ENCODE measurements at regions of chr4 and their contacts with region 1.

Region 1: GRCh38 chr4:123661080-123661737 is 264.6 kb downstream of the SPRY1 start:
- DNase-seq: no peak
- ATAC-seq: no peak
- H3K4me3 ChIP-seq: no peak overlapping the region
- H3K27ac ChIP-seq: no peak overlapping the region
- H3K4me1 ChIP-seq: peaks cover 30% of the 10 kb centered on the region
- H3K27me3 ChIP-seq: no peaks in the 10 kb centered on the region
- CTCF ChIP-seq: peak; percentile 36; the same call in 1 of the 2 replicates
- EP300 ChIP-seq: no peak
- POLR2A ChIP-seq: no peak
- RAD21 ChIP-seq: peak; percentile 47; the same call in 1 of the 2 replicates

Region 2: DNA sequence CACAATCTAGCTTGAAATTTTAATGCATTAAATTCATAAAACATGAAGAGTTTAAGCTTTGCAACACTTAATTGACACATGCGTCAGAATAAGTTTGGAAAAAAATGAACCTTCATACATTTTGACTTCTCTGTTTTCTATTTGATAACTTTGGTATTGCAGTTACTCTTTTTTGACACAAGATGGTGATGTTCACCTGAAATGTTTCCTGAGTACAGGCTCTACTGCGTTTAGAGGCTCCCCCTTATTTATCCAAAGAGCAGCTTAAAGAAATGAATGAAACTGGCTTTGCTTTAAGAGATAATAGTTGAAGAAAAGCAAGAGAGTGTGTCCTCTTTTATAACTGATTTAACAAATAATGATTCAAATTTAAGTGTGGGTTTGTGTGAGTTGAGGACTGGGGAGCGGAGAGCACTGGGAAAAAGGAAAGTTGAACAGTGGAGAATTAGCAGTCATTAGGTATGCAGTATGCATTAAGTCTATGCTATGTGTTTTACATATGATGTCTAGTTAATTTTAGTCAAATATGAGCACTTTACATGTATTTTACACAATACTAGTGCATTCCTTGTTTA is 558.2 kb before region 1 on chr4:
- CTCF ChIA-PET with region 1: interaction called, 17 read pairs
- POLR2A ChIA-PET with region 1: no interaction called
- in situ Hi-C with region 1: no loop called
- intact Hi-C with region 1: loop called (anchors 1 kb)
- DNase-seq: peak; percentile 49
- ATAC-seq: peak; percentile 77
- H3K4me3 ChIP-seq: no peak overlapping the region
- H3K27ac ChIP-seq: no peak overlapping the region
- H3K4me1 ChIP-seq: no peaks in the 10 kb centered on the region
- H3K27me3 ChIP-seq: no peaks in the 10 kb centered on the region
- CTCF ChIP-seq: peak; percentile 69
- EP300 ChIP-seq: no peak
- POLR2A ChIP-seq: no peak
- RAD21 ChIP-seq: peak; percentile 69; the same call in 1 of the 2 replicates

Region 3: GRCh38 chr4:123116412-123116811 is 544.8 kb before region 1 on chr4:
- CTCF ChIA-PET with region 1: no interaction called
- POLR2A ChIA-PET with region 1: no interaction called
- in situ Hi-C with region 1: loop called (anchors 10 kb)
- intact Hi-C with region 1: no loop called
- DNase-seq: peak; percentile 37
- ATAC-seq: no peak
- H3K4me3 ChIP-seq: no peak overlapping the region
- H3K27ac ChIP-seq: no peak overlapping the region
- H3K4me1 ChIP-seq: peaks cover 10% of the 10 kb centered on the region
- H3K27me3 ChIP-seq: no peaks in the 10 kb centered on the region; a peak in 1 of 5 replicates
- CTCF ChIP-seq: no peak
- EP300 ChIP-seq: no peak
- POLR2A ChIP-seq: no peak
- RAD21 ChIP-seq: no peak

Region 4: GRCh38 chr4:123127218-123127617 is 534.0 kb before region 1 on chr4:
- CTCF ChIA-PET with region 1: no interaction called
- POLR2A ChIA-PET with region 1: no interaction called
- in situ Hi-C with region 1: no loop called
- intact Hi-C with region 1: loop called (anchors 1 kb)
- DNase-seq: no peak
- ATAC-seq: no peak
- H3K4me3 ChIP-seq: no peak overlapping the region
- H3K27ac ChIP-seq: no peak overlapping the region
- H3K4me1 ChIP-seq: peaks cover 6% of the 10 kb centered on the region; the same call in 1 of the 2 replicates
- H3K27me3 ChIP-seq: no peaks in the 10 kb centered on the region
- CTCF ChIP-seq: no peak; the same call in 1 of the 2 replicates
- EP300 ChIP-seq: no peak
- POLR2A ChIP-seq: no peak
- RAD21 ChIP-seq: no peak

Region 5: DNA sequence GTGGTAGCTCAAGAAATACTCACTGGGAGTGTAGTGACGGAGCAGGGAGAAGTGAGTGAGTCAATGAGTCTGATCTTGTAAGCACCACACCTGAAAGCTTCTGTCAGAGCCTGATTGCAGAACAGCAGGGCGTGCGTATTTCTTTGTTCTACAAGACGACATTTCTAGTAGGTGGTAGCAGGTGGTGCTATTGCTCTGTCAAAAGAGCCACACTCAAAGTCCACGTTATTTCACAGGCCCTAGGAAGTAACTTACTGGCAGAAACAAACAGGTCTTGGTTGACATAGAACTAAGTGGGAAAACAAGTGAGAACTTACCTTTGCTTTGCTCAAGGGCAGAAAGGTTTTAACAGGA is 311.0 kb before region 1 on chr4:
- CTCF ChIA-PET with region 1: interaction called, 3 read pairs
- POLR2A ChIA-PET with region 1: no interaction called
- in situ Hi-C with region 1: no loop called
- intact Hi-C with region 1: loop called (anchors 1 kb)
- DNase-seq: peak; percentile 81
- ATAC-seq: peak; percentile 91
- H3K4me3 ChIP-seq: peak overlapping the region in 1 of 3 experiments; percentile 15; a peak in 1 of 6 replicates
- H3K27ac ChIP-seq: no peak overlapping the region
- H3K4me1 ChIP-seq: peaks cover 48% of the 10 kb centered on the region
- H3K27me3 ChIP-seq: no peaks in the 10 kb centered on the region
- CTCF ChIP-seq: peak; percentile 78
- EP300 ChIP-seq: 0 out of 4 replicates have a peak, but pooled peaks of 1 of the 2 experiments have one; percentile 33
- POLR2A ChIP-seq: no peak
- RAD21 ChIP-seq: peak; percentile 47

Region 6: DNA sequence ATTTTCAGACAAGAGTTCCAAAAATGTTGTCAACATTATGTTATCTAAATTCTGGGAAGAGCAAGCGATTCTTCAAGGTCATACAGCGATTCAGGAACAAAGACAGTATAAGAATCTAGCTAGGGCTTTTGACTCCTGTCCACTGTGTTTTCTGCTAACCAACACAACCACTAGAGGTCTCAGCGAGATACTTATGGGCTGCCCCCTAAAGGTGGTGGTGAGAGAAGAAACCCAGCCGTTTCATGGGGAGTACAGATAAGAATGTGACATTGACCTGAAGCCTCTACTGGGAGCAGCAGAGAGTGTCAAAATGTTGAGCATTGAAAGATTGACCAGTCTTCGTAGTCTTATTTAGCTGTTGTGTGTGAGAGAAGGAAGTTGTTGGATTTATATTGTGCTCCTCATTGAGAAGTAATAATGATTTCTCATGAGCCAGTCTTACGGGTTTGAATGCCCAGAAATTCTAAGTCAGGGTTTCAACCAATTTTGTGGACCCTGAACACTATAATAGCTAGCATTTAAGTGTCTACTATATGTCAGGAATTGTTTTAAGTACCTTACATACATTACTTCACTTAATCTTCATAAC is 96.4 kb before region 1 on chr4:
- CTCF ChIA-PET with region 1: interaction called, 37 read pairs
- POLR2A ChIA-PET with region 1: no interaction called
- in situ Hi-C with region 1: loop called (anchors 5 kb)
- intact Hi-C with region 1: loop called (anchors 2 kb)
- DNase-seq: peak; percentile 92
- ATAC-seq: peak; percentile 100
- H3K4me3 ChIP-seq: no peak overlapping the region
- H3K27ac ChIP-seq: no peak overlapping the region
- H3K4me1 ChIP-seq: peaks cover 35% of the 10 kb centered on the region
- H3K27me3 ChIP-seq: no peaks in the 10 kb centered on the region
- CTCF ChIP-seq: peak; percentile 92
- EP300 ChIP-seq: peak in 1 of 2 experiments; percentile 63; a peak in 2 of 4 replicates
- POLR2A ChIP-seq: no peak
- RAD21 ChIP-seq: peak; percentile 89

Region 7: DNA sequence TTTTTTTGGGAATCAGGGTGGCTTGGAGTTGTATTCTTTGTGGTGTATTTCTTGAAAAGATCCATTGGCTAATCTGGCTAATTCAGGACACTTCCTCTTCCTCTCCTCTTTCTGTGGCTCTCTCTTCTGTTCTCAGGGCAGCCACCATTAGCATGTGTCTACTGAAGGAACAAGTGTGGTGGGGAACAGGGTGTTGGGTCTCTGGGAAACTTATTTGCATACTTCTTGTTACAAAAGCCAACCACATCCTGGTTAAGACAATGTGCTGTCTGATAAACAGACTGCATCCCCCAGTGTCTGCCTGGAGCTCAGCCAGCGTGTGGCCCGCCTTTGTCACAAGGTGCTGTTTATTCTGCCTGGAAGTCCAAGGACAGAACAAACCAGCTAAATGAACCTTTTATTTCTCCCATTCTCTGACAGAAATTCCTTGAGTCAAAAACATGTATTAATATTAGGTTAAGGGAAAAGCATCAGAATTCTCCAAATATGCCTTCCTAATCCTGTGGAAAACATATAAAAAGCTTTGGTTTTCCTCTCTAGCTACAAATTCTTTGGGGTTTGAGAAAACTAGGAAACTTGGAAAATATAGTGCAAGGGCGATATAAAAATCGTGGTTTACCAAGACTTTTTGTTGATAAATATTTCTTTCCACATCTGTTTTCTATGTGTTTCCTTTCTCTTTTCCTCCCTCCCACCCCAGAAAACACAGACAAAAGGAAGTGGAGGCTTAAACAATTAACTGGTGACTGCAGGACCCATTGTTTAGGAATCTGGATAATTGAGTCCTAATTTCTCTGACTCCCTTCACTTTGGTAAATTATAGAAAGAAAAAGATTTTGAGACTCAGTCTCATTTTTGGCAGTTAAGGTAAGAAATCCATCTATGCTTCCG is 61.0 kb before region 1 on chr4:
- CTCF ChIA-PET with region 1: no interaction called
- POLR2A ChIA-PET with region 1: interaction called, 4 read pairs
- in situ Hi-C with region 1: no loop called
- intact Hi-C with region 1: loop called (anchors 1 kb)
- DNase-seq: peak; percentile 98
- ATAC-seq: peak; percentile 92
- H3K4me3 ChIP-seq: peak overlapping the region in 2 of 3 experiments; percentile 34 to 42; a peak in 2 of 6 replicates
- H3K27ac ChIP-seq: peak overlapping the region; percentile 78
- H3K4me1 ChIP-seq: peaks cover 42% of the 10 kb centered on the region
- H3K27me3 ChIP-seq: no peaks in the 10 kb centered on the region
- CTCF ChIP-seq: 0 out of 2 replicates have a peak, but pooled peaks have one; percentile 15
- EP300 ChIP-seq: peak; percentile 83 to 96; a peak in 3 of 4 replicates
- POLR2A ChIP-seq: peak in 1 of 2 experiments; percentile 69; a peak in 2 of 4 replicates
- RAD21 ChIP-seq: no peak

Measured in HepG2 (cell line).